ENCODE measurements at regions of chr2 and their contacts with region 1.

Region 1: GRCh38 chr2:136212423-136213378 is 94.8 kb upstream of the CXCR4 start:
- DNase-seq: peak; percentile 79
- H3K4me3 ChIP-seq: peak overlapping the region; percentile 4
- H3K27ac ChIP-seq: peak overlapping the region; percentile 41
- H3K4me1 ChIP-seq: peaks cover 69% of the 10 kb centered on the region
- CTCF ChIP-seq: no peak

Region 2: GRCh38 chr2:136225950-136226835 is 13.5 kb after region 1 on chr2:
- CTCF ChIA-PET with region 1: interaction called, 7 read pairs
- POLR2A ChIA-PET with region 1: interaction called, 26 read pairs
- intact Hi-C with region 1: no loop called
- DNase-seq: no peak
- H3K4me3 ChIP-seq: no peak overlapping the region
- H3K27ac ChIP-seq: no peak overlapping the region
- H3K4me1 ChIP-seq: peaks cover 36% of the 10 kb centered on the region
- CTCF ChIP-seq: no peak